H1 (cell line): ENCODE measurements at regions of chr13 and their contacts with region 1.

Region 1: DNA sequence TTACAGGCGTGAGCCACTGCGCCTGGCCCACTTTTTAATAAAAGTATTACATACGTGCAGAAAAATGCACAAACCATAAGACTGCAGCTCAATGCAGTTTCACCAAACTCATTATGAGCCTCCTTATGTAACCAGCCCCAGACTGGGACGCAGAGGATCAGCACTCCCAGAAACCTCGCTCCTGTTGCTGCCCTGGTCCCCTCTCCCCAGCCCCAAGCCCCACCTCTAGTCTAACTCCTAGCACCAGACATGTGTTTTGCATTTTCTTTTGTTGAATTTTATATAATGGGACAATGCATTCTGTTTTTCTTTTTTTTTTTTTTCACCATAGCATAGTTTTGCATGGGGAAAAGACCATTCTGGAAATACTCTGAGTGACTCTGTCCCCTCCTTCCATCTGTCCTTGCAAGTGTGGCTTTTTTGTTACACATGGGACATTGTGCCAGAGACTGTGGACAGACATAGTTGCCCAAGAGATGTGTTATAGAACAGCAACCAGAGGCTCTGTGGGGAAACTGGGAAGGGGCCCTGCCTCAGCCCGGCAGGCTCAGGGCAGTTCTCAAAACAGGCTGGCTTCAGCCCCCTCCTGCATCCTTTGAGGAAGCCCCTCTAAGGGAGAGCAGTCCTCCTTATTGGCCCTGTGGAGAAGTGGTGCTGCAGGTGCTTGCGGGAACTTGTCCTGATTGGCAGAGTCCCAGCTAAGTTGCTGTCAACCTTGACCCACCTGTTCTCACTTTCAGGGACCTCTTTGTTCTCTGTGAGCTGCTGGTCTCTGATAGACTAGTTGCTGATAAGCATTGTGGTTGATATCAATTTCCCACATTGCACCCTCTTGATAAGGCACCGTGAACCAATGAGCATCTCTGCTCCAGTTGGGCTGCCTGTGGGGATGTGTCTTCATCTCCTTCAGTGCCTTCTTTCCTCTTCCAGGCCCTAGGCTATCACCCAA is 13.8 kb upstream of the OLFM4 start:
- DNase-seq: no peak
- H3K4me3 ChIP-seq: no peak overlapping the region
- H3K27ac ChIP-seq: no peak overlapping the region
- H3K4me1 ChIP-seq: no peaks in the 10 kb centered on the region
- H3K27me3 ChIP-seq: no peaks in the 10 kb centered on the region
- CTCF ChIP-seq: no peak
- EP300 ChIP-seq: no peak
- POLR2A ChIP-seq: no peak
- RAD21 ChIP-seq: no peak

Region 2: DNA sequence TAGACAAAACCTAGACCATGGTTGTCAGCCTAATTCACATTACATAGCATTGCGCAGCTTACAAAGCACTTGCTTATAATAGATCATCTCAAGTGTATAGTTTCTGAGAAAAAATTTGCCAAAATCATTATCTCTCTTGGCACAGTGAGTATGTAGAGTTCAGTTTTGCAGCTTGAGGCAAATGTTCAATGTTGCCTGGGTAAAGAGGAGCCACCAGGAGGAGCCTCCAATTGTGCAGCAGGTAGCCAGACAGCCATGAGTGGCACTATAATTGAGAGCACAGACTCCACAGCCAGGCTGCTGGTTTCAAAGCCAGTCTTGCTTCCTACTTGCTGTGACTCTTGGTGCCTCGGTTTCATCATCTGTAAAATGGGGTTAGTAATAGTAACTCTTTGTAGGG is 10.2 kb before region 1 on chr13:
- CTCF ChIA-PET with region 1: interaction called, 18 read pairs
- POLR2A ChIA-PET with region 1: no interaction called
- DNase-seq: no peak
- H3K4me3 ChIP-seq: no peak overlapping the region
- H3K27ac ChIP-seq: no peak overlapping the region
- H3K4me1 ChIP-seq: no peaks in the 10 kb centered on the region
- H3K27me3 ChIP-seq: no peaks in the 10 kb centered on the region
- CTCF ChIP-seq: peak in 2 of 3 experiments; percentile 3 to 7; a peak in 2 of 4 replicates
- EP300 ChIP-seq: no peak
- POLR2A ChIP-seq: no peak
- RAD21 ChIP-seq: peak; percentile 15 to 38; a peak in 3 of 4 replicates

Region 3: DNA sequence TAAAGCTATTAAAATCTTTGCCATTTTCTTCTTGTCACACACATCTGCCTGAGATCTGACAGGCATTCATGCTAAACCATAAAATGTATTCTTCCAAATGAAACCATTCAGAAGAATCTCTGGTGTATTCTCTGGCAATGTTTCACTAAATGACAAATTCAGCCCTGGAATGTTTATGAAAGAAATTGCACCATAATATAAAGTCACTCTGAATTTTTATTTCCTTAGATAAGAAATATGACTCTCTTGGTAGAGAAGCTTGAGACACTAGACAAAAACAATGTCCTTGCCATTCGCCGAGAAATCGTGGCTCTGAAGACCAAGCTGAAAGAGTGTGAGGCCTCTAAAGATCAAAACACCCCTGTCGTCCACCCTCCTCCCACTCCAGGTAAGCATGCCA is 28.1 kb after region 1 on chr13:
- CTCF ChIA-PET with region 1: no interaction called
- POLR2A ChIA-PET with region 1: no interaction called
- DNase-seq: no peak
- H3K4me3 ChIP-seq: no peak overlapping the region
- H3K27ac ChIP-seq: no peak overlapping the region
- H3K4me1 ChIP-seq: peaks cover 0 to 3% (median 0%) of the 10 kb centered on the region in 4 experiments; a peak in 1 of 7 replicates
- H3K27me3 ChIP-seq: no peaks in the 10 kb centered on the region
- CTCF ChIP-seq: no peak
- EP300 ChIP-seq: no peak
- POLR2A ChIP-seq: no peak
- RAD21 ChIP-seq: no peak